ENCODE measurements at regions of chr11 and their contacts with region 1.

Region 1: GRCh38 chr11:124673333-124674167 is at the starts of genes SIAE and SPA17:
- DNase-seq: peak; percentile 91
- ATAC-seq: peak; percentile 97
- H3K4me3 ChIP-seq: peak within 1 kb of the TSS; percentile 73 to 99 (median 99)
- H3K27ac ChIP-seq: peak within 1 kb of the TSS; percentile 74
- H3K4me1 ChIP-seq: peaks cover 19% of the 10 kb centered on the region
- H3K27me3 ChIP-seq: no peaks in the 10 kb centered on the region; a peak in 1 of 5 replicates
- CTCF ChIP-seq: no peak
- EP300 ChIP-seq: 0 out of 4 replicates have a peak, but pooled peaks of 1 of the 2 experiments have one; percentile 38
- POLR2A ChIP-seq: peak; percentile 73 to 87
- RAD21 ChIP-seq: peak; percentile 21; the same call in 1 of the 2 replicates
- total RNA-seq, gene SIAE: 4.5 and 7.0 TPM in 2 replicates
- total RNA-seq, gene SPA17: 8.4 and 12.7 TPM in 2 replicates

Region 2: DNA sequence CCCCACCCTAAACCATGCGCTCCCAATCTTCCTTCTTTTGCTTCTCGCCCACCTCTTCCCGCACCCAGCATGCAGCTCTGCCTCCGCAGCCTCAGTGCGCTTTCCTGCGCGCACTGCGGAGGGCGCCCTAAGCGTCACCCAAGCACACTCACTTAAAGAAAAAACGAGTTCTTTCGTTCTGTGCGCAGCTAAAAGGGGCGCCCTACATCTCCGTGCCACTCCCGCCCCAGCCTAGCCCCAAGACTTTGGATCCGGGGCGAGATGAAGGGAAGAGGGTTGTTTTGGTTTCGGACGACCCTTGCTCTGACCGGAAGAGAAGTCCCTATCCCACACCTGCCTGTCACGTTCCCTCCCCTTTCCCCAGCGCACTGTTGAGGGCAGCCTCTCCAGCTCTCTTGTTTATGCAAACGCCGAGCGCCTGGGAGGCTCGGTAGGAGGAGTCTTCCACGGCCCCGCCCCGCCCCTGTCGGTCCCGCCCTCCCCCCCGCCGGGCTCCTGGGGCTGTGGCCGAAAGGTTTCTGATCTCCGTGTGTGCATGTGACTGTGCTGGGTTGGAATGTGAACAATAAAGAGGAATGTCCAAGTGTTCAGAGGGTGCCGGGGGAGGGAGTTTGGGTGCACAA is 73.2 kb after region 1 on chr11:
- CTCF ChIA-PET with region 1: no interaction called
- POLR2A ChIA-PET with region 1: interaction called, 26 read pairs
- in situ Hi-C with region 1: no loop called
- intact Hi-C with region 1: loop called (anchors 2 kb)
- DNase-seq: peak; percentile 89
- ATAC-seq: peak; percentile 90
- H3K4me3 ChIP-seq: peak overlapping the region; percentile 70 to 86 (median 78)
- H3K27ac ChIP-seq: peak overlapping the region; percentile 51
- H3K4me1 ChIP-seq: peaks cover 45% of the 10 kb centered on the region
- H3K27me3 ChIP-seq: peaks cover 0 to 71% of the 10 kb centered on the region in 2 experiments; a peak in 3 of 5 replicates
- CTCF ChIP-seq: peak; percentile 81
- EP300 ChIP-seq: no peak
- POLR2A ChIP-seq: peak; percentile 55 to 69; a peak in 3 of 4 replicates
- RAD21 ChIP-seq: peak; percentile 55

Region 3: GRCh38 chr11:124793466-124794278 is 120.1 kb after region 1 on chr11:
- CTCF ChIA-PET with region 1: interaction called, 24 read pairs
- POLR2A ChIA-PET with region 1: no interaction called
- in situ Hi-C with region 1: no loop called
- intact Hi-C with region 1: loop called (anchors 1 kb)
- DNase-seq: peak; percentile 51
- ATAC-seq: peak; percentile 69
- H3K4me3 ChIP-seq: no peak overlapping the region
- H3K27ac ChIP-seq: no peak overlapping the region
- H3K4me1 ChIP-seq: peaks cover 37% of the 10 kb centered on the region
- H3K27me3 ChIP-seq: no peaks in the 10 kb centered on the region
- CTCF ChIP-seq: peak; percentile 61
- EP300 ChIP-seq: no peak
- POLR2A ChIP-seq: no peak
- RAD21 ChIP-seq: no peak

Region 4: DNA sequence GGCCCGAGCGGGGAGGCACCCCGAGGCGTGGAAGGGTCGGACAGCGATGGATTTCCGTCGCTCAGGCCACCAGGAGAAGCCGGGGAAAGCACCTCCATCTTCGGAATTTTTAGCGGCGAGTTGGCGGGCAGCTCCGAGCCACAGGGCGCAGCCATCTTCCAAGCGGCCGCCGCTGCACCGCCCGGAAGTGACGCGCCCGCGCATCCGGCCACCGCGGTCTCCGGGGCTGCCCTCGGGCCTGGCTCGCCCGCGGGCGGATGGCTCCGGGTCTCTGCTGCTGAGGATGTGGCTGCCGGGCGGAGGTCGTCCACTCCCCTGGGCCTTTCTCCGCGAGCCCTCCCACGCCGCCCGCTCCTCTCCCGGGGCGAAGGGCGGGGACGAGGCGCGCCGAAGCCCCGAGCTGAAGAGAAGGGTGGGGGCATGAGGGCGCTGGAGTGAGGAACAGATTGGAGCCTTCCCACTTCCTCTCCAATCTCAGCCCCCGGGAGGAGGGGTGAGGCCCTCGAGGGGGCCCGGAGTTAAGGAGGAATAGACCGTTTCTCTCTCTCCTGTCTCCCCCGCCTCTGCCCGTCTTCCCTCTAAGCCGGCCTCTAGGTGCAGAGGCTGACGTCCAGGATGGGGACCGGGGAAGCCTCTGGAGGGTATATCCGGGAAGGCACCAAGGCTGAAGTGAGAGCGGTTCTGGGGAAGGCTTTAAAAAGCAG is 126.8 kb after region 1 on chr11 and contains the start of gene MSANTD2:
- CTCF ChIA-PET with region 1: no interaction called
- POLR2A ChIA-PET with region 1: interaction called, 14 read pairs
- in situ Hi-C with region 1: no loop called
- intact Hi-C with region 1: no loop called
- DNase-seq: peak; percentile 46
- ATAC-seq: peak; percentile 98
- H3K4me3 ChIP-seq: peak within 1 kb of the TSS; percentile 94 to 96 (median 96)
- H3K27ac ChIP-seq: peak within 1 kb of the TSS; percentile 88
- H3K4me1 ChIP-seq: peaks cover 46% of the 10 kb centered on the region
- H3K27me3 ChIP-seq: no peaks in the 10 kb centered on the region; a peak in 1 of 5 replicates
- CTCF ChIP-seq: no peak; the same call in 1 of the 2 replicates
- EP300 ChIP-seq: peak in 1 of 2 experiments; percentile 10; a peak in 1 of 4 replicates
- POLR2A ChIP-seq: peak; percentile 83 to 96
- RAD21 ChIP-seq: no peak
- total RNA-seq, gene MSANTD2: 6.8 and 10.1 TPM in 2 replicates

Region 5: GRCh38 chr11:124837491-124837856 is 163.9 kb after region 1 on chr11:
- CTCF ChIA-PET with region 1: interaction called, 45 read pairs
- POLR2A ChIA-PET with region 1: no interaction called
- in situ Hi-C with region 1: loop called (anchors 5 kb)
- intact Hi-C with region 1: loop called (anchors 1 kb)
- DNase-seq: peak; percentile 58
- ATAC-seq: peak; percentile 57
- H3K4me3 ChIP-seq: no peak overlapping the region
- H3K27ac ChIP-seq: no peak overlapping the region
- H3K4me1 ChIP-seq: peaks cover 32% of the 10 kb centered on the region
- H3K27me3 ChIP-seq: peaks cover 11 to 55% of the 10 kb centered on the region in 2 experiments
- CTCF ChIP-seq: peak; percentile 71
- EP300 ChIP-seq: no peak
- POLR2A ChIP-seq: no peak
- RAD21 ChIP-seq: no peak